ENCODE measurements at regions of chr3 and their contacts with region 1.

Region 1: DNA sequence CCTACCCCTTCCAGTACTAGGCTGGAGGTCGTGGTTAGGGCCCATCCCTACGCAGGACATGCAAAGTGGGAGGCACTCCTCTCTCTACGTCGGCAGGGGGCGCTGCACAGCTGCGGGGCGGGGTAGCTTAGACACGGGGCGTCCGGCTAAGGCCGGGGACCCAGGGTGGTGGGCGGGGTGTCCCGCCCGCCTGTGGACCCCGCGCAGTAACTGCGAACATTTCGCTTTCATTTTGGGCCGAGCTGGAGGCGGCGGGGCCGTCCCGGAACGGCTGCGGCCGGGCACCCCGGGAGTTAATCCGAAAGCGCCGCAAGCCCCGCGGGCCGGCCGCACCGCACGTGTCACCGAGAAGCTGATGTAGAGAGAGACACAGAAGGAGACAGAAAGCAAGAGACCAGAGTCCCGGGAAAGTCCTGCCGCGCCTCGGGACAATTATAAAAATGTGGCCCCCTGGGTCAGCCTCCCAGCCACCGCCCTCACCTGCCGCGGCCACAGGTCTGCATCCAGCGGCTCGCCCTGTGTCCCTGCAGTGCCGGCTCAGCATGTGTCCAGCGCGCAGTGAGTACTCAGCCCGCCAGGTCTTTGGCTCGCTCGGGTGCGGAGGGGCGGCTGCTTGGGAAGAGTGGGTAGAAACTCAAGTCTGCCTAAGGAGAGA is at the start of gene IL12A:
- DNase-seq: peak; percentile 77 to 88 (median 79)
- H3K4me3 ChIP-seq: peak within 1 kb of the TSS; percentile 38
- H3K4me3 Mint-ChIP-seq: peak within 1 kb of the TSS; percentile 85 to 93 (median 88)
- H3K27ac ChIP-seq: peak within 1 kb of the TSS; percentile 13
- H3K27ac Mint-ChIP-seq: peak within 1 kb of the TSS in 7 of 8 donors; percentile 64 to 99 (median 87)
- H3K4me1 ChIP-seq: peaks cover 10% of the 10 kb centered on the region
- H3K4me1 Mint-ChIP-seq: peaks cover 21 to 37% (median 28%) of the 10 kb centered on the region in 3 donors
- H3K27me3 ChIP-seq: no peaks in the 10 kb centered on the region
- H3K27me3 Mint-ChIP-seq: no peaks in the 10 kb centered on the region
- total RNA-seq, gene IL12A: not detected

Region 2: DNA sequence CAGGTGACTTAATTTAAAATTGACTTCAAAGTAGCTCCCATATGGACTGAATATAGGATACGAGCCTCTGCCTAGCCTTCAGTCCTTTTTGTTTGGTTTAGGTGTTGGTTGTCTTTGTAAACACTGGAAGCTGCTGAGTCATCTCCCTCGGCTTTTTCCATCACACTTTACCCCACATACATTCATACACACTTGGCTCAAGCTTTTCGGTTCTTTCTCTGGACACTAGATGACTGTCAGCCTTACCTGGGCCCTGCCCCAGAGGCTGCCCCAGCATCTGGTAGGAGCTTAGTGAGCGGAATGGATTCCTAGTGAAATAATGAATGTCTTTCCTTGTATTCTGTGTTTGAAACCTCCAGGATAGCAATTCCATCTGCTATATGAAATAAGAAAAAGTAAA is 201.6 kb before region 1 on chr3:
- CTCF ChIA-PET with region 1: no interaction called
- POLR2A ChIA-PET with region 1: no interaction called
- DNase-seq: no peak
- H3K4me3 ChIP-seq: no peak overlapping the region
- H3K4me3 Mint-ChIP-seq: no peak overlapping the region
- H3K27ac ChIP-seq: no peak overlapping the region
- H3K27ac Mint-ChIP-seq: no peak overlapping the region
- H3K4me1 ChIP-seq: no peaks in the 10 kb centered on the region
- H3K4me1 Mint-ChIP-seq: no peaks in the 10 kb centered on the region
- H3K27me3 ChIP-seq: no peaks in the 10 kb centered on the region
- H3K27me3 Mint-ChIP-seq: peaks cover 1 to 7% of the 10 kb centered on the region in 2 donors

Region 3: DNA sequence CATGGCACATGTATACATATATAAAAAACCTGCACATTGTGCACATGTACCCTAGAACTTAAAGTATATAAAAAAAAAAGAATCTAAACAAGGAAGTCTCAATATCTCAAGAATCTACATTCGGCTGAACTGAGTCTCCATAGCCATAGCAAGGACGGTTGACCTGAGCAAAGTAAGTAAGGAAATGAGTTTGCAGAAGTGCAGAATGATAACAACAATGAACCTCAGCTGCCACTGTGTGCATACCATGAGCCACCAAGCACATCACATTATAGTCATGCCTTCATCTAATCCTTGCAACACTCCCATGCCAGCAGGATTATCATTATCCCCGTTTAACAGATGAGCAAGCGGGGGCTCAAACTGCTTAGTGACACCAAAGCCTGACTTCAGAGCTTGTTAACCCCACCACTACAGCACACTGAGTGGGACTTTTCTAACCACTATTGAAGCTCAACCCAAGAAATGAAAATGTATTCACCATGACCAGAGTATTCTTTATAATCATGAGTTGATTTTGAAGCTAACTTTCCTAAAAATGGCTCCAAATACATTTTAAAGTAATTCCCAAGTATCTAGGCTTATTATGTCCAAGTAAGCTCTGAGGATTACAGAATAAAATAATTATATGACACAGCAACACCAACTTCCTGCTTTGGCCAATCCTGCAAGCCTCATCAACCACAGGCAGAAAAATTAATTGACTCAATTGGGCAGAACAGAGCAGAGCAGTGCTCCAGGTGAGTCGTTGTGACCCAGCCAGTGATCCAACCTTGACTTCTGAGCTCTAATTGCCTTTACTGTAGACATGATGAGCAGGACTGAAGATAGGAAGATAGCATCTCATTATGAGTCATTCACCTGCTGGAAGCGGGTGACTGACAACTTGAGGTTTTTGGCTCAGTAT is 47.5 kb before region 1 on chr3:
- CTCF ChIA-PET with region 1: no interaction called
- POLR2A ChIA-PET with region 1: no interaction called
- DNase-seq: no peak
- H3K4me3 ChIP-seq: no peak overlapping the region
- H3K4me3 Mint-ChIP-seq: no peak overlapping the region
- H3K27ac ChIP-seq: no peak overlapping the region
- H3K27ac Mint-ChIP-seq: no peak overlapping the region
- H3K4me1 ChIP-seq: no peaks in the 10 kb centered on the region
- H3K4me1 Mint-ChIP-seq: no peaks in the 10 kb centered on the region
- H3K27me3 ChIP-seq: no peaks in the 10 kb centered on the region
- H3K27me3 Mint-ChIP-seq: peaks cover 5 to 27% of the 10 kb centered on the region in 2 donors

Region 4: DNA sequence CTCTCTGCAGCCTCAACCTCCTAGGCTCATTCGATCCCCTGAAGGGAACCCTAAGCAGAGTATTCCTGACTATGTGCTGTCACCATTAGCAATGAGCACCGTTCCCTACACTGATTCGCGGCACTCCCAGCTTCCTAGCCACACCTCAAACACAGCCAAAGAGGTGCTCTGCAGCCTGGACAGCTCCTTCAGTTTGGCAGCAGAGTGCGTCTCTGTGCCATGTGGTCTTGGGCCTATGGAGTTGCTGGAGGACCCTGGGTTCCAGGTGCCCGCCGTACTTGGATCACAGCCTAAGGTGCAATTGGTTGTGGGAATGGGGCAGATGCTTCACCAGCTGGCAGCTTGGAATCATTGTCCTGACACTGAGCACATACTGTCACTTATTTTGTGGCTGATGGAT is 17.4 kb before region 1 on chr3:
- CTCF ChIA-PET with region 1: no interaction called
- POLR2A ChIA-PET with region 1: no interaction called
- DNase-seq: no peak
- H3K4me3 ChIP-seq: no peak overlapping the region
- H3K4me3 Mint-ChIP-seq: no peak overlapping the region
- H3K27ac ChIP-seq: no peak overlapping the region
- H3K27ac Mint-ChIP-seq: no peak overlapping the region
- H3K4me1 ChIP-seq: no peaks in the 10 kb centered on the region
- H3K4me1 Mint-ChIP-seq: no peaks in the 10 kb centered on the region
- H3K27me3 ChIP-seq: no peaks in the 10 kb centered on the region
- H3K27me3 Mint-ChIP-seq: peaks cover 8 to 30% of the 10 kb centered on the region in 2 donors

Region 5: GRCh38 chr3:160003520-160004128 is 14.9 kb after region 1 on chr3:
- CTCF ChIA-PET with region 1: interaction called, 33 read pairs
- POLR2A ChIA-PET with region 1: no interaction called
- DNase-seq: peak in 2 of 5 donors; percentile 10 to 49
- H3K4me3 ChIP-seq: no peak overlapping the region
- H3K4me3 Mint-ChIP-seq: no peak overlapping the region
- H3K27ac ChIP-seq: no peak overlapping the region
- H3K27ac Mint-ChIP-seq: no peak overlapping the region
- H3K4me1 ChIP-seq: no peaks in the 10 kb centered on the region
- H3K4me1 Mint-ChIP-seq: no peaks in the 10 kb centered on the region
- H3K27me3 ChIP-seq: no peaks in the 10 kb centered on the region
- H3K27me3 Mint-ChIP-seq: no peaks in the 10 kb centered on the region